Activated naive CD4-positive, alpha-beta T cell treated with anti-CD3 and anti-CD28 coated beads for 36 hours (primary cell): ENCODE measurements at regions of chr11 and their contacts with region 1.

Region 1: GRCh38 chr11:5600374-5600851 is 4.0 kb downstream of the TRIM6 start:
- DNase-seq: peak; percentile 79
- H3K4me3 Mint-ChIP-seq: no peak overlapping the region
- H3K27ac Mint-ChIP-seq: no peak overlapping the region
- H3K4me1 Mint-ChIP-seq: peaks cover 6% of the 10 kb centered on the region
- H3K27me3 Mint-ChIP-seq: no peaks in the 10 kb centered on the region

Region 2: DNA sequence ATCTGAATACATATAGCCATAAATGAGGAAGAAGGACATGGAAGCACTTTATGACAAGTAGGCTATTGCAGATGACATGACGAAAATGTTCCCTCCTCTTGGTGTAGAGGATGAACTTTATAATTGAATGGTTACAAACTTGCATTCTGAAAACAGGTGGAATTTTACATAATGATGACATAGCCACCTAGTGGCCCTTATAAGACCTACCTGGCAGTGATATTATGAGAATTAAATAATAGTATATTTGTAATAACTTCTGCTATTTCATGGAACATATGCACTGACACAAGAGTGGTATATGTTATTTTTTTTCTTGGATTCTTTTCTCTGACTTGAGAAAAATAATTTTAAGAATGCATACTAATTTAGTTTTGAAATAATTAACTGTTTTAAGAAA is 112.1 kb after region 1 on chr11:
- CTCF ChIA-PET with region 1: interaction called, 3 read pairs
- intact Hi-C with region 1: loop called (anchors 1 kb)
- DNase-seq: no peak
- H3K4me3 Mint-ChIP-seq: no peak overlapping the region
- H3K27ac Mint-ChIP-seq: peak overlapping the region; percentile 7
- H3K4me1 Mint-ChIP-seq: peaks cover 3% of the 10 kb centered on the region
- H3K27me3 Mint-ChIP-seq: no peaks in the 10 kb centered on the region